HepG2 (cell line): ENCODE measurements at regions of chr15 and their contacts with region 1.

Region 1: DNA sequence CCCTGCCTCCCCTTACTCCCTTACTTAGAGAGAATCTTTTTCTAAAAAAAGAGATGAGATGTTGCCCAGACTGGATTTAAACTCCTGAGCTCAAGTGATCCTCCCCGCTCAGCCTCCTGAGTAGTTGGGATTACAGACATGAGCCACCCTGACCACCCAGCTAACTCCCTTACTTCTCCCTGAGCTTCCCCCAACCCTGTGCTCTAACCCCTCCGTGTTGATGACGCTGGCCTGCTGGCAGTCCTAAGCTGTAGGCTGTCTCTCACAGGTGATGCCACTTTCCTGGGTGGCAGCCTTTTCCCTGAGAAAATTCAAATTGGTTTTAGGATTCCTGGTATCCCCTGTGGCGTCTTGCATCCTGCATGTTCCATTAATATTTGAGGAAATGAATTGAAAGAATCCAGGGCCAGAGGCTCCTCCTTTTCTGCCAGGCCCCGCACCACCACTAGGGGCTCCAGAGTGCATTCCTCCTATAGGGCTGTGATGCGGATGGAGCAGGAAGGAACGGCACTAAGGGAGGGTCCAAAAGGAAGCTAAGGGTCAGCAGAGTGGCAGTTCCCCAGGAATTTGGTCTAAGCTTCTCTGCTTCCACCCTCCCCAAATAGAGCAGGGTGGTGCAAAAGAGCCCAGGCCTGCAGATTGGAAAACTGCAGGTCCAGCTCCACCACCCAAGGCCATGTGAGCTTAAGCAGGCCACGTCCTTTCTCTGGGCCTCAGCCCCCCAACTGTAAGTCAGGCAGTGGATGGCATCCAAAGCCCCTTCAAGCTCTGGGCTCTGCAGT is 101.1 kb downstream of the DAPK2 start:
- DNase-seq: peak; percentile 48
- ATAC-seq: peak; percentile 88
- H3K4me3 ChIP-seq: peak overlapping the region; percentile 34 to 68 (median 43)
- H3K27ac ChIP-seq: no peak overlapping the region
- H3K4me1 ChIP-seq: peaks cover 49% of the 10 kb centered on the region
- H3K27me3 ChIP-seq: no peaks in the 10 kb centered on the region
- CTCF ChIP-seq: peak; percentile 81
- EP300 ChIP-seq: no peak
- POLR2A ChIP-seq: no peak
- RAD21 ChIP-seq: peak; percentile 29; the same call in 1 of the 2 replicates

Region 2: DNA sequence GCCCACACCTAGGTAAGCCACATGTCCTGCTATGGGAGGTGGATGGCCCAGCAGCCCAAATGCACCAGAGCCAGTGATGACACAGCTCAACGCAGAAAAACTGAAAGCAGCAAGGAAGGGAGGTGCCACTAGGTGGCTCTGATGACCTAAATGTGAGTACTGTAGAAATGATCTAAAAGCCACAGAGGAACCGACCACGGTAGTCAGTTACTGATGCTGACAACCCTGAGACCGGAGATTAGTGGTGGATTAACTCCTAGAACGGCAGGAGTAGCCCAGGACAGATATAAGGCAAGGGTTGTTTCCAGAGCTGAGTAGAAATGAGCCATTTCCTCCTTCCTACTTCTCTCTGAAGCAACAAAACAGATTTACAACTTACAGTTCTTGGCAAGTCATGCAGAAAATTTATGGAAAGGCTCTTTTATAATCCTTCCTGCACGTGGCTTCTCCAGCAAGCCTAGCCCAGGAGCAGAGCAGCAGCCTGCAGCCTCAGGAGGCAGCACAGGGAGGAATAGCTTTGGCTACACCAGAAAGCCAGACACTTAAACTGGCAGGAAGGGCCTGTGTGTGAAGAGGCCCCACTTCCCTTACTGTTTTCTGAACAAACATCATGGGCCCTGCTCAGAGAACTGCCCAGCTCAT is 334.9 kb before region 1 on chr15:
- CTCF ChIA-PET with region 1: no interaction called
- POLR2A ChIA-PET with region 1: no interaction called
- in situ Hi-C with region 1: no loop called
- intact Hi-C with region 1: loop called (anchors 1 kb)
- DNase-seq: peak; percentile 77
- ATAC-seq: peak; percentile 94
- H3K4me3 ChIP-seq: no peak overlapping the region
- H3K27ac ChIP-seq: peak overlapping the region; percentile 27
- H3K4me1 ChIP-seq: peaks cover 21% of the 10 kb centered on the region
- H3K27me3 ChIP-seq: no peaks in the 10 kb centered on the region
- CTCF ChIP-seq: peak; percentile 90
- EP300 ChIP-seq: no peak
- POLR2A ChIP-seq: no peak
- RAD21 ChIP-seq: peak; percentile 60

Region 3: DNA sequence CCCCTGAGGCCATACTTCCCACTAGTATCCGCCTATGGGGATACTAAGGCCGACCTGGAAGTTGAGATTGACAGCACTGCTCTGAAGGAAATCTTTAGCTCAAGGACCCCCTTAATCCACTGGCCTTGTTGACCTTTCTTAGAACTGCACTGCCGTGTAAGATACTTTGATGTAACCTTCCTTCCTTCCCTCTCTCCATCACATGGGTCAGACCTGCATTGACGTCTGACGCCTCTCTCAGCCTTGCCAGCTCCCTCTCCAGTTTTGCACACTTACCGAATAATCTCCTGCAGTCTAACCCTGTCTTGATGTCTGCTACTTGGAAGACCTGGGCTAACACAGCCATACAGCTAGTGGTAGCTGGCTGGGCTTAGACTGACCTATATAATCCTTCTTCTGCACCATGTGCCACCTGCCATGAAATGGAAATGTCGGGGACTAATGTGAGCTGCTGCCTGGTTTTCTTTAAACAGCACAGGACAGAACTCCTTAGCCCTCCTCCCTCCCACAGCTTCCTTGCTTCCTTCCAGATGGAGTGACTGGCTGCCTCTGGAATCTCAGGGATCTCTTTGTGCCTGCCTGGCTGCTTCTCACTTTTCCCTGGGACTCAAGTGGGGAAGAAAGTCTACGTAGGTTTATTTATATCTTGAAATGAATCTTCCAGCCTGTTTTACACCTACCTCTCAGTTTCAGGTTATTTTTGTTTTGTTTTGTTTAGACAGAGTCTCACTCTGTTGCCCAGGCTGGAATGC is 72.3 kb before region 1 on chr15:
- CTCF ChIA-PET with region 1: no interaction called
- POLR2A ChIA-PET with region 1: no interaction called
- in situ Hi-C with region 1: no loop called
- intact Hi-C with region 1: no loop called
- DNase-seq: no peak
- ATAC-seq: no peak
- H3K4me3 ChIP-seq: no peak overlapping the region
- H3K27ac ChIP-seq: no peak overlapping the region
- H3K4me1 ChIP-seq: no peaks in the 10 kb centered on the region
- H3K27me3 ChIP-seq: no peaks in the 10 kb centered on the region; a peak in 1 of 5 replicates
- CTCF ChIP-seq: no peak
- EP300 ChIP-seq: no peak
- POLR2A ChIP-seq: no peak
- RAD21 ChIP-seq: no peak

Region 4: DNA sequence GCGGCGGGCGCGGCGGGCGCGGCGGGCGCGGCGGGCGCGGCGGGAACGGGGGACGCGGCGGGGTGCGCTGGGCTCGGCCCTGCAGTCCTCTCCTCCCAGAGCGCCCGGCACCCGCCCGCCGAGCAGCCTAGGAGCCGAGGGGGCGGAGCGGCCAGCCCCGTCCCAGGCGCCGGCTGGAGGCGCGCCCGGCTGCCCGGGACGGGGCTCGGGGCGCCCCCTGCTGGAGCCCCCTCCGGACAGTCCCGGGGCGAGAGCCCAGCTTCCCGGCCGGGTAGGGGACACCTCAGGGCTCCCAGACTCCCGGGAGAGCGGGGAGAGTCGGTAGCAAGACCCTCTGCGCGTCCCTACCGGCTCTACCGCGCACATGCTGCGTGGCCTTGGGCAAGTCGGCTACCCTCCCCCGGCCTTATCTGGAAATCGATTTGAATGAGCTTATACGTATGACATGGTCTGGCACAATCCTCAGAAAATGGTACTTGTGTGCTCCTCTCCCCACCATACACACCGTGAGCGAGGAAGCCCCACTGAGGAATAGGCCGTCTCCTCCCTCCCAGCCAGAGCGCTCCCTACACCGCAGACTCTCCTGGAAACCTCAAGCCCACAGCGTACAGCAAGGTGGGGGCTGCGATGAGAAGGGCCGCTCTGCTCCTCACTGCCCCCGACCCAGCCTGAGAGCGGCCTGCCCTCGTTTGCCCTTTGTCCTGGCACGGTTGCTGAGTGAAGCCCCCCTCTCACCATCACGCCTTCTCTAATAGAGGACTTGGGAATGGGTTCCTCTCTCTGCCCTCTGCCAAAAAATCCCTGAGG is 101.4 kb after region 1 on chr15 and contains the start of gene DAPK2:
- CTCF ChIA-PET with region 1: interaction called, 15 read pairs
- POLR2A ChIA-PET with region 1: no interaction called
- in situ Hi-C with region 1: loop called (anchors 5 kb)
- intact Hi-C with region 1: loop called (anchors 1 kb)
- DNase-seq: peak; percentile 27
- ATAC-seq: peak; percentile 87
- H3K4me3 ChIP-seq: peak within 1 kb of the TSS; percentile 40 to 68 (median 41); a peak in 5 of 6 replicates
- H3K27ac ChIP-seq: no peak within 1 kb of the TSS
- H3K4me1 ChIP-seq: peaks cover 40% of the 10 kb centered on the region
- H3K27me3 ChIP-seq: peaks cover 2 to 46% of the 10 kb centered on the region in 2 experiments; a peak in 4 of 5 replicates
- CTCF ChIP-seq: peak; percentile 72
- EP300 ChIP-seq: no peak
- POLR2A ChIP-seq: no peak
- RAD21 ChIP-seq: peak; percentile 93
- total RNA-seq, gene DAPK2: 0.14 and 0.33 TPM in 2 replicates